HAP-1 (cell line): ENCODE measurements at regions of chr4 and their contacts with region 1.

Region 1: DNA sequence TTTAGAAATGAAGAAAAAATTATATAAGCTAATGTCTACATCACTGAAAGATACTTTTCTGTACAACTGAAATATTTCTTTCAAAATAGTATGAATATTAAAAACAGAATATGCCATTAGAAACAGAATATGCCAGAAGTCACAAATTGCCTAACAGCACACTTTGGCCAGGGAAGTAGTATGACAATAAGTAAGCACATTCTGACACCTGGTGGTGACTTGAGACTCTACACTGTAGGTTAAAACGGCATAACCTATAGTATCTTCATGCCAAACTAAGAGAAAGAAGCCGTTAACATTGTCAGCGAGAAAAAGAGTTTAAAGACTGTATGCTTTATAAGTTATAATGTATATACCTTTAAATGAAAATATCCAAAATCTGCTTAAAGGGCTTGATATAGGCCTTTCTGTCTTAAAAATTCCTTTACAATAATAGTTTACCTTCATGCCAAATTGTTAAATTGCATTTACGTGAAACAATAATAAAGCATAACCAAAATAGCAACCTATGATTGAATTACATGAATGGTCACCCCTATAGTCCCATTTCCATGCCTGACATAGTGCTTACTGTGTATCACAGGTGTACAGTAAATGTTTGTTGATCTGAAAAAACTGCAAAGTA is 32.8 kb downstream of the FAM13A start:
- DNase-seq: peak; percentile 66 to 76
- H3K4me3 ChIP-seq: no peak overlapping the region
- H3K4me1 ChIP-seq: no peaks in the 10 kb centered on the region
- H3K27me3 ChIP-seq: no peaks in the 10 kb centered on the region

Region 2: GRCh38 chr4:88706574-88706973 is 317.6 kb before region 1 on chr4:
- in situ Hi-C with region 1: loop called (anchors 10 kb)
- DNase-seq: peak; percentile 57 to 70
- H3K4me3 ChIP-seq: no peak overlapping the region
- H3K4me1 ChIP-seq: no peaks in the 10 kb centered on the region
- H3K27me3 ChIP-seq: no peaks in the 10 kb centered on the region

Region 3: DNA sequence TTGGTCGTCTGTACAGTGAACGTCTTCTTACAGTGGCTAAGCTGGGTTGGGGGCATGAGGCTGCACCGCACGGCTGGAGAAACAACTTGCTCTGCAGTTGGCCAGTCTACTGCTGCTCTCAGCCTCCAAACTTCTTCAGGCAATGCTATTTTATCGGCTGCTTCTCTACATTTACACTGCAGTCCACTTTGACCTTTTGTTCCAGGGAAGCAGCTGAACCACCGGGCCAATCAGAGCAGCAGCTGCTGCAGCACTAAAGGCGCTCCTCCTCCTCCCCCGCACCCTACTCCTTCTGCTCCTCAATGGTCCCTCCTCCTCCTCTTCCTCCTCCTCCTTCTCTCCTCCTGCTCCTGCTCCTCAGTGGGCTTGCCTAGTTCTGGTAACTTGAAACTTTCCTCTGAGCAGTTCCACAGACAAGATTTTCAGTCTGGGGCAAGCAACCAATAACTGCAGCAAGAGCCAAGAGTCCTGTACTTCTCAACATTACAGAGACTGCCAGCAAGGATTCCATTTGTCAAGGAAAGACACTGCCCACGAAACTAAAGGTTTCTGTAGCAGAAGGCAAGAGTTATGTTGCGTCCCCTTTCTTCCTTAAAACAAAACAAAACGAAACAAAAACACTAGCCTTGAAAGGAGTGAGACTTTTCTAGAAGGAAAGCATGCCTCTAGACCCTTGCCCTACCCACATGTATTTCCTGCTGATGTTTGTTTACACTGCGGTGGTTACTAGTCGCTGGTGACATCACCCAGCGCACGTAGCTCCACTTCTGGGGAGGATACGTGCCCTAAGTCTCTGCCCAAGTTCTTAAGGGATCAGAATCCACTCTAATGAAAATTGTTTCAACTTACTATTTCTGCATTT is 200.9 kb before region 1 on chr4:
- in situ Hi-C with region 1: loop called (anchors 5 kb)
- DNase-seq: peak; percentile 90 to 94
- H3K4me3 ChIP-seq: peak overlapping the region; percentile 26
- H3K4me1 ChIP-seq: peaks cover 20% of the 10 kb centered on the region
- H3K27me3 ChIP-seq: no peaks in the 10 kb centered on the region